A673 (cell line): ENCODE measurements at regions of chr4 and their contacts with region 1.

Region 1: GRCh38 chr4:156038772-156039171 is 85.1 kb upstream of the CTSO start:
- DNase-seq: no peak
- H3K4me3 ChIP-seq: no peak overlapping the region
- H3K27ac ChIP-seq: no peak overlapping the region
- H3K4me1 ChIP-seq: no peaks in the 10 kb centered on the region
- H3K27me3 ChIP-seq: no peaks in the 10 kb centered on the region
- CTCF ChIP-seq: no peak

Region 2: DNA sequence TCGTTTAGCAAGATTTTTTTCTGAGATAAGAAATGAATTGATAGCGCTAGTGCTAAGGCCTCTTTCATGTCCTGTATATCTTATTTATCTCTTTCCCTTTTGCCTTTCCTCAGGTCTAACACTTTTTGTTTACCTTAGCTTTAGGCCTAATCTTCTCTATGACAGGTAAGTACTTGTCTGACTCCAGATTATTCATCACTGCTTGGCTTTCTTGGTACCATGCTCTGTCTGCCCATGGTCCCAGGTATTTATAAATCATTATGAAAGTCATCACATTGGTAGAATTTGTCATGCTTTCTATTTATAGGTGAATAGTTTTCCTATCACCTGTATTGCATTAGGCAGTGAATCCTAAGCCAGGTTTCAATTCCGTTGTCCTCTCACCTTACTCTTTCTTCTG is 14.4 kb after region 1 on chr4:
- CTCF ChIA-PET with region 1: no interaction called
- POLR2A ChIA-PET with region 1: no interaction called
- intact Hi-C with region 1: loop called (anchors 1 kb)
- DNase-seq: no peak
- H3K4me3 ChIP-seq: no peak overlapping the region
- H3K27ac ChIP-seq: no peak overlapping the region
- H3K4me1 ChIP-seq: no peaks in the 10 kb centered on the region
- H3K27me3 ChIP-seq: no peaks in the 10 kb centered on the region
- CTCF ChIP-seq: no peak